ENCODE measurements at regions of chr5 and their contacts with region 1.

Region 1: DNA sequence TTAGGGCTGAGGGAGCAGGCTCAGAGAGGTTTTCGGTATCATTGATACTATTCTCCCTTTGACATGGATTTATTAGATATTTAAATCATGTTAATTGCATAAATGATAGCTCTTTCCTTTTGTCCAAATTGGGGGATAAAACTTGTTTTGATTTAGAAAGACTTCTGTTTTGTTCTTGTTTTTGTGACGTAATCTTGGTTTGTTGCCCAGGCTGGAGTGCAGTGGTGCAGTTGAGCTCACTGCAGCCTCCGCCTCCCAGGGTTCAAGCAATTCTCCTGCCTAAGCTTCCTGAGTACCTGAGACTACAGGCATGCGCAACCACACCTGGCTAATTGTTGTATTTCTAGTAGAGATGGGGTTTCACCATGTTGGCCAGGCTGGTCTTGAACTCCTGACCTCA is 7.1 kb downstream of the MAT2B start:
- DNase-seq: no peak
- ATAC-seq: no peak
- H3K4me3 ChIP-seq: no peak overlapping the region
- H3K27ac ChIP-seq: no peak overlapping the region
- H3K4me1 ChIP-seq: peaks cover 10% of the 10 kb centered on the region; the same call in 1 of the 2 replicates
- H3K27me3 ChIP-seq: no peaks in the 10 kb centered on the region
- CTCF ChIP-seq: no peak

Region 2: GRCh38 chr5:163473635-163474243 is 38.8 kb before region 1 on chr5:
- CTCF ChIA-PET with region 1: no interaction called
- POLR2A ChIA-PET with region 1: no interaction called
- in situ Hi-C with region 1: no loop called
- intact Hi-C with region 1: loop called (anchors 1 kb)
- DNase-seq: no peak
- ATAC-seq: 0 out of 2 replicates have a peak, but pooled peaks have one; percentile 66
- H3K4me3 ChIP-seq: no peak overlapping the region
- H3K27ac ChIP-seq: no peak overlapping the region
- H3K4me1 ChIP-seq: no peaks in the 10 kb centered on the region; the same call in 1 of the 2 replicates
- H3K27me3 ChIP-seq: no peaks in the 10 kb centered on the region
- CTCF ChIP-seq: peak; percentile 33; the same call in 1 of the 2 replicates

Region 3: DNA sequence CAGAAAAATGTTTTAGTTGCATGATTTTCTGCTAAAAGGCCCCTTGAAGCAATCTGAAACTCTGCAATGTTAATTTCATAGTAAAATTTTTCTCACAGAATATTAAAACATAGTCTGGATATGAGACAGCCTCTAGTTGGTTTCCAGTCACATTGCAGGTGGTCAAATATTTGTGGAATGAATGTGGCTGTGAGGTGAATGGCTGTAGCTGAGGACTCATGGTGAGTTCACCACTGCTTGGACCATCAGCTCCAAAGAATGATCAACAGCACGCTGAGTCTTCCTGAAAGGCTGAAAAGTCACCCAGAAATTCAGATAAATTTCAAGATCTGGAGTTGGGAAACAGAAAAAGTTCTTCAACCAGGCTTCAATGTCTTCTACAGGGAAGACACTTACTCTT is 72.7 kb after region 1 on chr5:
- CTCF ChIA-PET with region 1: no interaction called
- POLR2A ChIA-PET with region 1: no interaction called
- in situ Hi-C with region 1: no loop called
- intact Hi-C with region 1: no loop called
- DNase-seq: no peak
- ATAC-seq: no peak
- H3K4me3 ChIP-seq: no peak overlapping the region
- H3K27ac ChIP-seq: no peak overlapping the region
- H3K4me1 ChIP-seq: no peaks in the 10 kb centered on the region
- H3K27me3 ChIP-seq: no peaks in the 10 kb centered on the region; the same call in 1 of the 2 replicates
- CTCF ChIP-seq: no peak

Measured in Panc1 (cell line).